ENCODE measurements at regions of chr5 and their contacts with region 1.

Region 1: DNA sequence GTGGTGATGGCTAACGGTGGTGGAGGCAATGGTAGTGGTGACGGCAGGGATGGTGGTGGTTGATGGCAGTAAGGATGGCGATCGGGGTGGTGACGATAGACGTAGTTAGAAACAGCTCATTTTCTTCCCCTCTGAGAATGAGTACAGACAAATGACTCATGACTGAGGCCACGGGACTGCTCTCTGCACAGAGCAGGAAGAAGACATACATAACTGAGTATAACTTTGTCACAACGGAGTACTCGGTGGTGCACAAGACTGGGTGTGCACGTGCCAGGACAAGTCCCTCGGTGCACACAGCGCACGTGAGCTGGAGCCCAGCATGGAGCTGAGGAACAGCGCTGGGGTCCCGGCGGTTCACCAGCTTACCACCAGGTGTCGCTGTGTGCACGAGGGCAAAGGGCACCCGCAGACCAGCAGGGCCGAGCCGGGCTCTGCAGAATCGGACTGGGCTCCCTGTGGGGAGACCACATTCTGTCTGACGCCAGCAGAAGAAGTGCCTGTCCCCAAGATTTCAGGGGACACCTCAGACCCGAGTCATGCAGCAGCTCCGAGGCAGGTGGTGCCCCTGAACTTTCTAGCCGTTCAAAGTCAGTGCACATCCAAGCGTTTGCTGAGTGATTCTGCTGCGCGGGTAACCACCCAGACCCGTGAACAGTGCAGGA is 188.6 kb downstream of the FSTL4 start:
- DNase-seq: peak; percentile 65 to 90 (median 89)
- ATAC-seq: peak; percentile 82 to 88
- H3K4me3 ChIP-seq: no peak overlapping the region
- H3K27ac ChIP-seq: no peak overlapping the region
- H3K4me1 ChIP-seq: no peaks in the 10 kb centered on the region
- H3K27me3 ChIP-seq: no peaks in the 10 kb centered on the region

Region 2: GRCh38 chr5:132736853-132737833 is 686.6 kb before region 1 on chr5 and contains the start of gene KIF3A:
- intact Hi-C with region 1: no loop called
- DNase-seq: peak; percentile 99
- ATAC-seq: peak; percentile 100
- H3K4me3 ChIP-seq: peak within 1 kb of the TSS; percentile 39
- H3K27ac ChIP-seq: no peak within 1 kb of the TSS
- H3K4me1 ChIP-seq: no peaks in the 10 kb centered on the region
- H3K27me3 ChIP-seq: no peaks in the 10 kb centered on the region
- total RNA-seq, gene KIF3A: 7.4 to 9.8 (median 9.2) TPM

Region 3: GRCh38 chr5:133483406-133484090 is 59.8 kb after region 1 on chr5:
- intact Hi-C with region 1: no loop called
- DNase-seq: no peak
- ATAC-seq: peak; percentile 40 to 59
- H3K4me3 ChIP-seq: no peak overlapping the region
- H3K27ac ChIP-seq: no peak overlapping the region
- H3K4me1 ChIP-seq: no peaks in the 10 kb centered on the region
- H3K27me3 ChIP-seq: no peaks in the 10 kb centered on the region

Region 4: DNA sequence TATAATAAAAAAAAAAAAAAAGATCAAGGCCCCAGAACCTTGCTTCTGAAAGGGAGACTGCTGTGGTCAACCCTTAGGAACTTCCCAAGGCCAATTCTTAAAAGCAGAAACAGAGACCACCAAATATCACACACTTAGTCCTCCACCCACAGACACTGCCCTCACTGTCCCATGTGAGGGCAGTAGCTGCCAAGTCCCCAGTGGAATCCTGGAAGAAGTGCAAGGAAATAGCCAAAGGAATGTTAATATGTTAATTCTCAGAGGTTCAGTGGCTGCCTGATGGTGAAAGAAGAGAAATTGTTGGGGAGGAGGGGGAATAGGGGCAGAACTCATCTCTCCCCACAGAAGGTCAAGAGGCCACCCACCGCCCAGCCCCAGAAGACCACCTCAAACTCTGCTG is 165.5 kb after region 1 on chr5:
- intact Hi-C with region 1: no loop called
- DNase-seq: no peak
- ATAC-seq: no peak
- H3K4me3 ChIP-seq: no peak overlapping the region
- H3K27ac ChIP-seq: no peak overlapping the region
- H3K4me1 ChIP-seq: no peaks in the 10 kb centered on the region
- H3K27me3 ChIP-seq: no peaks in the 10 kb centered on the region

Region 5: DNA sequence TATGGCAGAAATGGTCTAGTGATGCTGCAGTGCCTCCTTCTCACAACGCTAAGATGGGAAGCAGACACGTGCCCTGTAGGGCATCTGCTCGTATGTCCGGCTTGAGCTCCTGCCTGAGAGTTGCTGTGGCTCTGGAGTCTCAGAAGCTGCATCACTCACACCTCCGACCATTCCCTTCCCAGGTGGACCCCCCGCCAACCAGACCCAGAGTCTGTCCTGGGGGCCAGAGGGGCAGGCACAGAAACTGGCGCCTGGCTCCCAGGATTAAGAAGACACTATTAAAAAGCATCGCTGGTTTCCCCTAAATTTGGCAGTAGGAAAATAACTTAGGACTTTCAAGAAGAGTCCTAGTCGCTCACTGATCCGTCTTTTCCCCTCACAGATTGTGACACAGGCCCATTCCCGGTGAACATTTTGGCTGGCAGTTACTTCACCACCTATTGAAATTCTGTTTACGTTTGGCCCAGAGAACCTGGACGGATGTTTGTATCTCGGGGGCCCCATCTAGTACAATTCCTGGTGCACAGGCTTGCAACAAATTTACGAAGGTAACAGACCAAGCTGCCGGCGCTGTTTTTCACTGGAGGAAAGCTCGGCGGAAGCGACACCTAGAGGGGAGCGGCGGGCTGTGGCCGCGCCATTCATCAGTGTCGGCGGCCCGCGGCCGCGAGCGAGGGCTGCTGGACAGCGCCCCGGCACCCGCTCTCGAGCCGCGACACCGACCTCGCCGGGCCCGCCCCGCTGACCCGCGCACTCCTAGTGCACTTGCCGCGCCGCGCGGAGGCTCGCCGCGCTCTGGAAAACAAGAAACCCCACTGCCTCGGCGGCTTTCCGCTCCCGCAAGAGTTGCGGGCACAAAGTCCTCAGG is 187.0 kb after region 1 on chr5:
- intact Hi-C with region 1: loop called in 2 of 4 experiments (anchors 5 to 10 kb)
- DNase-seq: peak; percentile 62 to 84 (median 80)
- ATAC-seq: peak; percentile 96 to 97
- H3K4me3 ChIP-seq: peak overlapping the region; percentile 41
- H3K27ac ChIP-seq: no peak overlapping the region
- H3K4me1 ChIP-seq: no peaks in the 10 kb centered on the region
- H3K27me3 ChIP-seq: no peaks in the 10 kb centered on the region

Region 6: DNA sequence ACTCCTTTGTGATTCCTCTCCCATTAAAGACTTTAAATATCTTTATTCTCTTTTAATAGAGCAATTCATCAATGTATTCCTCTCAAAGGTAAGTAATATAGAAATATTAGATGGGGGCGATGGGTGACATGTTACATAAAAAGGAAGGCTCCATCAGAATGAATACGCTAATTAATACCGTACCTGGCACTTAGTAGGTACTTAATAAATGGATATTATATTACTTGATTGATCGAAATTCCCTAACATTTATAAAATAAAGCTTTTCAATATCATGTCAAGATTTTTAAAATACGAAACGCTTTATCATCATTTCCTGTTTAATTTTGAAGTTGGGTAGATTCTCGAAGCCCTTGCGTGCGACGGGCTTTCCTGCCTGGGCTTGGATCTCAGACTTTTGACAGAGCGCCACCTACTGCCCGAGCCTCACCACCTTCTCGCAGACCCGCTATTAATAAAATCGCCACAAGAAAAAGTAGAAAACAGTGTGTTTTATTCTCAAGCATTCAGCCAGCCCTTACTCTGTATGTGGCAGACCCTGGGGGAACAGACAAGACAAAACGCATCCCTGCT is 445.3 kb after region 1 on chr5:
- intact Hi-C with region 1: loop called in 2 of 4 experiments (anchors 5 to 10 kb)
- DNase-seq: peak; percentile 80 to 92 (median 86)
- ATAC-seq: peak; percentile 71 to 81
- H3K4me3 ChIP-seq: peak overlapping the region; percentile 21
- H3K27ac ChIP-seq: no peak overlapping the region
- H3K4me1 ChIP-seq: no peaks in the 10 kb centered on the region
- H3K27me3 ChIP-seq: no peaks in the 10 kb centered on the region

Region 7: DNA sequence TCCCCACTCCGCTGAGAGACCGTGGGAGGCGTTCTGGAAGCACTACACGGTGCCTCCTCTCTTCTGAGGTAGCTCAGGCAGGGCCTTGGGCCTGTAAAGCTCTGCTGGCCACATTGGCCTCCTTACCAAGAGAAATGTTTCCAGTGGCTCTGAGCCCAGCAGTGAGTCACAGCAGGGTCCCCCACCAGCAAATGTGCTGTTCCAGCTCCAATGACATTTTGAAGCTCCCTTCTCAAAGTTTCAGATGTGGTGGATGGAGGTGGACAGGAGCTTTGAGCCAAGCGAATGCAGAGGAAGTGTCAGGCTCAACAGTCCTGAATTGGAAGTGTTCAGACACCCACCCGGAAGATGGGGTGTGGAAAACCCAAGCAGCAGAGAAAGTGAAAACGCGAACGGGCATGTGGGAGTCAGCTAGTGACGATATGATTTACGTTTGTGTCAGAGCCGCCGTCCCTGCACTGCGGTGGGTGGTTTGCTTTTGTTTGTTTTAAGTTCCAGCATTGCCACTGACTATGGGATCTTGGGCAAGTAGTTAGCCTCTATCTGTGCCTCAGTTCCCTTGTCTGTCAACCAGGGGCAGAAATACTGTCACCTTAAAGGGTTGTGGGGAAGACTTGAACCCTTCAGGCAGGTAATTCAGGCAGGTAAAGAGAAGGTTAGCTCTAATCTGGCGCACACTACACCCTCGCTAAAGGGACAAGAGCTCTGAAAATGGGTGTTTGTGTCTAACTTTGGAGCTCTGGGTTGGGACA is 506.5 kb after region 1 on chr5:
- intact Hi-C with region 1: loop called in 1 of 4 experiments (anchors 10 kb)
- DNase-seq: peak; percentile 60 to 80 (median 71)
- ATAC-seq: peak; percentile 65 to 76
- H3K4me3 ChIP-seq: no peak overlapping the region
- H3K27ac ChIP-seq: no peak overlapping the region
- H3K4me1 ChIP-seq: no peaks in the 10 kb centered on the region
- H3K27me3 ChIP-seq: no peaks in the 10 kb centered on the region

Region 8: GRCh38 chr5:133944263-133945185 is 520.8 kb after region 1 on chr5:
- intact Hi-C with region 1: loop called in 3 of 4 experiments (anchors 5 to 10 kb)
- DNase-seq: peak in 1 of 3 donors; percentile 37
- ATAC-seq: peak; percentile 37 to 58
- H3K4me3 ChIP-seq: no peak overlapping the region
- H3K27ac ChIP-seq: no peak overlapping the region
- H3K4me1 ChIP-seq: peaks cover 5% of the 10 kb centered on the region
- H3K27me3 ChIP-seq: no peaks in the 10 kb centered on the region